ENCODE measurements at regions of chr6 and their contacts with region 1.

Region 1: DNA sequence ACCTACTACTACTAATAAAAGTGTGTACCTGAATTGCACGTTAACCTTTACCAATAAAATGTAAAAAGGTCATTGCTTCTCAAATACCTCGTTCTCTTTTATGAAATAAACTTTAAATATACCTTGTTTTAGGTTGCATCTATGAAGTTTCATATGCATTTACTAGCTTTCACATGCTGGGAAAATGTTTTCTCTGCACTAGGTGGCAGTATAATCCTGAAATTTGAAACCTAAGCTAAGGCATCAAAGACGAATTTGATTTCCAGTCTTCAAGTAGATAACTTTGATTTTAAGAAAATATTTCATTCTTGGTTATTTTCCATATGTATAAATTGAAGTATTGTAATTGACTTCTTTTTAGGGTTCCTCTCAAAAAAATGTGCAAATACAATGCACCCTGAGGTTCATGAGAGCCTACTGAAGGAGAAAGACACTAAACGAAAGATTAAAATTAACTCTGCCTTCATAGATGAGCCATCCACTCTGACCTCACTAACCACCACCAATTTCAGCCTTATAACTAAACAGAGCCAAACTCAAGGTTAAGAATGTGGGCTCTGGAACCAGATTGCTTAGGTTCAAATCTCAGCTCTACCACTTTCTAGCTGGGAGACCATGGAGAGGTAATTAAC is 7.3 kb upstream of the COL9A1 start:
- DNase-seq: peak; percentile 33
- ATAC-seq: no peak
- H3K4me3 ChIP-seq: no peak overlapping the region
- H3K27ac ChIP-seq: no peak overlapping the region
- H3K4me1 ChIP-seq: 0 out of 2 replicates have a peak, but pooled peaks cover 3% of the 10 kb centered on the region
- H3K27me3 ChIP-seq: peaks cover 10% of the 10 kb centered on the region
- CTCF ChIP-seq: peak; percentile 72; the same call in 1 of the 2 replicates

Region 2: GRCh38 chr6:70299456-70299855 is 10.7 kb before region 1 on chr6:
- CTCF ChIA-PET with region 1: interaction called, 22 read pairs
- POLR2A ChIA-PET with region 1: no interaction called
- in situ Hi-C with region 1: no loop called
- intact Hi-C with region 1: no loop called
- DNase-seq: no peak
- ATAC-seq: no peak
- H3K4me3 ChIP-seq: no peak overlapping the region
- H3K27ac ChIP-seq: no peak overlapping the region
- H3K4me1 ChIP-seq: no peaks in the 10 kb centered on the region
- H3K27me3 ChIP-seq: peaks cover 17% of the 10 kb centered on the region
- CTCF ChIP-seq: no peak

Region 3: GRCh38 chr6:70369332-70369950 is 59.3 kb after region 1 on chr6:
- CTCF ChIA-PET with region 1: interaction called, 53 read pairs
- POLR2A ChIA-PET with region 1: no interaction called
- in situ Hi-C with region 1: no loop called
- intact Hi-C with region 1: loop called (anchors 1 kb)
- DNase-seq: peak; percentile 67
- ATAC-seq: peak; percentile 93
- H3K4me3 ChIP-seq: no peak overlapping the region
- H3K27ac ChIP-seq: no peak overlapping the region
- H3K4me1 ChIP-seq: no peaks in the 10 kb centered on the region
- H3K27me3 ChIP-seq: peaks cover 14% of the 10 kb centered on the region; the same call in 1 of the 2 replicates
- CTCF ChIP-seq: peak; percentile 98

Measured in Panc1 (cell line).